ENCODE measurements at regions of chr17 and their contacts with region 1.

Region 1: DNA sequence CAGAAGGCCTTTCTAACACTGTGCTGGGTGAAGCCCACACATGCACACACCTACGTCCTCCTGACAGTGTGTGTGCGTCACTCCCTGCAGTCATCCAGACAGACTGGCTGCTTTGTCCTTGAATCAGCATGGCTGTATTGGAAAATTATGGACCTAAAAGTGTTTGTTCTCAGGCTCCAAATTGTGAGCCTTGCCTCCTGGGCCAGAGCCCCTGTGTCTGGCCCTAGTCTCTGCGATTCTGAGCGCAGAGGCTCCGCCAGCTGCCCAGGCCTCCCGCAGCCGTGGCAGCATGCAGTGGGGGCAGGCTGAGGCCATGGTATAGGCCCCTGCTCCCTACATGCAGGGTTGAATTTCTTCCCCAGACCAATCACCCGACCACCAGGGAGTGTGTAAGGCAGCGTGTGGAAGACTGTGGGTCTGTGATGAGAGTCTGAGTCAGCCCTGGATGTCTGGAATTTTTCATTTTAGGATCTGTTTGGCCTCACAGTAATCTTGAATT is 166.9 kb downstream of the LGALS9B start:
- DNase-seq: no peak
- ATAC-seq: no peak

Region 2: GRCh38 chr17:20114466-20114865 is 186.0 kb before region 1 on chr17:
- intact Hi-C with region 1: no loop called
- DNase-seq: no peak
- ATAC-seq: no peak

Region 3: DNA sequence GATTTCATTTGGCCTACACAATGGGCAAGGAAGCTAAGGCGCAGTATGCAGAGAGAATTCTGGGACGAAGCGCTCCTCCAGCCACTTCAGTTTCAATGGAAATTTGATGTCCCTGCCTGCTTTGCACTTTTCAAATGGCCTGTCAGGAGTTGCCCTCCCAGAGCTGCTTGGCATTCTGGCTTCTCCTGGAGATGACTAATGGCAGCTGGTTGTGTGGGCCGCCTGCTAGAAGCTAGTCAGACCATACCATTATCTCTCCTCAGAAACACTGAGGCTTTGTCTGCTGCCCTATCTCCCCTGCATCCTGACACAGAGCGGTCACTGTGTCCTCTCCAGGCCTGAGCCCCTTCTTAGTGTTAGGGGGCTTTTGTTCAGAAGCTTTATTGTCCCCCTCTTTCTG is 111.2 kb before region 1 on chr17:
- intact Hi-C with region 1: no loop called
- DNase-seq: no peak
- ATAC-seq: peak; percentile 52

Region 4: GRCh38 chr17:20216154-20216815 is 84.2 kb before region 1 on chr17:
- intact Hi-C with region 1: loop called (anchors 10 kb)
- DNase-seq: no peak
- ATAC-seq: no peak

Measured in sciatic nerve (tissue), 2 donors.